WTC11 (cell line): ENCODE measurements at regions of chr4 and their contacts with region 1.

Region 1: DNA sequence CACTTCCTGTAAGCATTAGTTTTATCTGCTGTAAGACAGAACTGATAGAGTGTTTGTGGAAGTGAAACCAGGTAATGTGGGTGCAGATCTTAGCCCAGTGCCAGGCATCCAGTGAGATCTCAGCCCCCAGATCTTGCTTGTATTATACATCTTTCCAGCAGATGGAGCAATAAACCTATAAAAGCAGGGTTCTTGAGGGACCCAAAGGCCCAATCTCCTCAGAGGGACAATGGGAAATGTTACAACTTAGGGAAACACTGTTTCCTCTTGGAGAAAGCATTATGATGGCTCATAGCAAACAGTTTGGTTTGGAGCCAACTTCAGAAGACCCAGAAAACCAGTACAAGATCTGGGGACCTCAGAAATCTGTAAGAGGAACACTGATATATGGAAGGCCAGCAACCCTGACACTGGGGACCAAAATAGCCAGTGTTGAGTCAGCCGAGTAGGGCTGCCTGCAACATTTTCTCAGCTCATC is 206.3 kb downstream of the SLC7A11 start:
- DNase-seq: no peak
- ATAC-seq: peak; percentile 97
- H3K4me3 Mint-ChIP-seq: no peak overlapping the region
- H3K27ac Mint-ChIP-seq: no peak overlapping the region
- H3K4me1 Mint-ChIP-seq: peaks cover 8% of the 10 kb centered on the region
- H3K27me3 Mint-ChIP-seq: no peaks in the 10 kb centered on the region
- CTCF ChIP-seq: peak; percentile 25; the same call in 1 of the 2 replicates

Region 2: DNA sequence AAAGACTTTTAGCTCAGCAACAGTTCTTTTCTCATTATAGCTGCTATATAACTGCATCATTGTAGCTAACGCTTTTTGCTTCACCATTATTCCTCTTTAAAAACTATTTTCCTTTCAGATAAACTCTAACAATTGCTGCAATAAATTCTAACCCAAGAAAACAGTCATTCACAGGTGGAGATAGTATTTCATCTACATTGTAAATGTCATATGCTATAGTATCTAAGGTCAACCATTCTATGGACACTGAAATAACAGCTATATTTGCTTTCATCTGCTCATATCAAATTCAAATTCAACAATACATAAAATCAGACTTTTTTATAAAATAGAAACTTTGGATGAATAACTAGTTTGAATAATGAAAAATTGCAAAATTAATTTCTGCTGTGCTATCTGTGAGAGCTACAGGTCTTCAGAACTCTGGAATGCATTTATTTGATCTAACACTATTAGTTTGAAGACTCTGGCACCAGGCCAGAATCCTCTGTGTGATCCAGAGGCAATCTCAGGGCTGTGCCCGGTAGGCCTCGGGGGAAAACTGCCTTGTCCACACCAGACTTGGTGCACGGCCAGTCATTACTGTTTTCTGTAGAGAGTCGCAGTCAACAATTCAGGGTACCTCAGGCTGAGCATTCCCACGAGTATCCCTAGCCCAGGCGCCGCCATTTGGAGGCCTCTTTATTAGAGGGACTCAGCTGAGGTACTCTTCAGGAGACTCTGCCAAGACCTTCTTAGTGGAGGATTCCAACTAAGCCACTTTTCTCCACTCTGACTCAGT is 126.1 kb before region 1 on chr4:
- CTCF ChIA-PET with region 1: no interaction called
- POLR2A ChIA-PET with region 1: no interaction called
- DNase-seq: peak; percentile 10
- ATAC-seq: peak; percentile 73
- H3K4me3 Mint-ChIP-seq: no peak overlapping the region
- H3K27ac Mint-ChIP-seq: no peak overlapping the region
- H3K4me1 Mint-ChIP-seq: peaks cover 21% of the 10 kb centered on the region
- H3K27me3 Mint-ChIP-seq: no peaks in the 10 kb centered on the region
- CTCF ChIP-seq: no peak

Region 3: DNA sequence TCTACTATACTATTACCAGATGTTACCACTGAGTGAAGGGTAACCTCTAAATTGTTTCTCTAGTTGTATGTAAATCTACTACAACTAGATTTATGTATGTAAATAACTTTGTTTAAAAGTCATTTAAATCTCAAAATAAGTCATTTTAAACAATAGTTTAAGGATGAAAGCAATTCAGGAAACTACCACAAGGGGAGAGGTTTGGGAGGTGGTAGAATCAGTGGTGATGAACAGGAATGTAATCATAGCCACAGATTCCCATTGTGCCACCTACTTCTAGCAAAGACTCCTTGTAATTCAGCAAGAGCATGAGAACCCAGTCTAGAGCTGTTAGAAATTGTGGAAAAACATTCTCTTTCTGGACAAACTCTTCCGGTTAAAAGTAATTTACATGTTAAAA is 28.2 kb before region 1 on chr4:
- CTCF ChIA-PET with region 1: no interaction called
- POLR2A ChIA-PET with region 1: no interaction called
- DNase-seq: no peak
- ATAC-seq: peak; percentile 82
- H3K4me3 Mint-ChIP-seq: no peak overlapping the region
- H3K27ac Mint-ChIP-seq: no peak overlapping the region
- H3K4me1 Mint-ChIP-seq: peaks cover 15% of the 10 kb centered on the region
- H3K27me3 Mint-ChIP-seq: no peaks in the 10 kb centered on the region
- CTCF ChIP-seq: 0 out of 2 replicates have a peak, but pooled peaks have one; percentile 22

Region 4: GRCh38 chr4:138522366-138522765 is 486.5 kb after region 1 on chr4:
- CTCF ChIA-PET with region 1: interaction called, 10 read pairs
- POLR2A ChIA-PET with region 1: no interaction called
- DNase-seq: no peak
- ATAC-seq: peak; percentile 93
- H3K4me3 Mint-ChIP-seq: no peak overlapping the region
- H3K27ac Mint-ChIP-seq: no peak overlapping the region
- H3K4me1 Mint-ChIP-seq: no peaks in the 10 kb centered on the region
- H3K27me3 Mint-ChIP-seq: no peaks in the 10 kb centered on the region; the same call in 1 of the 2 replicates
- CTCF ChIP-seq: peak; percentile 34; the same call in 1 of the 2 replicates